ENCODE measurements at regions of chr9 and their contacts with region 1.

Region 1: DNA sequence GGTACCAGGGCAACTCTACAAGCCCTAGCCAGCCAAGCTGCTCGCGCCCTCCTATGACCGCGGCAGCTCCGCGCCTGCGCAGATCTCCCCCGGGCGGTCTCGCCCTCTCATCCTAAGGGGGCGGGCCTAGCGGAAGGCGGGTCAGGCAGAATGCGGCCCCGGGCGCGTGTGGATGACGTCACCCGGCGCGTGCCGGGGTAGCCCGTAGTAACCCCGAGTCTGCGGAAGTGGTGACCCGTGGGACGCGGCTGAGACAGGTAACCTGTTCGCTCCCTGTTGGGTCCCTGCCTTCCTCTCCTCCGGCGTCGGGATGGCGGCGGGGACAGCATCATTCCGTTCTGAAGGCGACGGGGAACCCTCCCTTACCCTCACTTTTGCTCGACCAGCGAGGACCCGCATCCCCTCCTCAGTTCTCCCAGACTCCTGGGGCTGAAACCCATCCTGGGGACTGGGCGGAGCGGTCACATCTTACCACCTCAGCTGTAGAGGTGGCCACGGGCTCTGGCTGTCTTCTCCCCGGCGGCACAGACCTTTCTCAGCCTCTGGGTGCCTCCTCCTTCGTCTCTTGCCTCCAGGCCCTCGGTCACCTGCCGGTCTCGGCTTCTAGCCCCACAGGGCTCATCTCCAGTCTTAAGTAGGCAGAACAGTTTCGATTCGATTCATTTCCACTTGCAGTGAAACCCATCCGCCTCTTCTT is at the start of gene AOPEP:
- DNase-seq: peak; percentile 94
- ATAC-seq: peak; percentile 95
- H3K4me3 ChIP-seq: peak within 1 kb of the TSS; percentile 91
- H3K27ac ChIP-seq: peak within 1 kb of the TSS; percentile 35
- H3K4me1 ChIP-seq: peaks cover 8% of the 10 kb centered on the region
- H3K27me3 ChIP-seq: no peaks in the 10 kb centered on the region
- CTCF ChIP-seq: no peak
- total RNA-seq, gene AOPEP: 23.1 and 28.7 TPM in 2 replicates

Region 2: GRCh38 chr9:94289691-94290090 is 437.0 kb before region 1 on chr9:
- CTCF ChIA-PET with region 1: no interaction called
- POLR2A ChIA-PET with region 1: no interaction called
- intact Hi-C with region 1: loop called (anchors 10 kb)
- DNase-seq: peak; percentile 39
- ATAC-seq: peak; percentile 60; the same call in 1 of the 2 replicates
- H3K4me3 ChIP-seq: no peak overlapping the region
- H3K27ac ChIP-seq: no peak overlapping the region
- H3K4me1 ChIP-seq: no peaks in the 10 kb centered on the region
- H3K27me3 ChIP-seq: no peaks in the 10 kb centered on the region
- CTCF ChIP-seq: no peak